GM12878 (cell line): ENCODE measurements at regions of chr2 and their contacts with region 1.

Region 1: DNA sequence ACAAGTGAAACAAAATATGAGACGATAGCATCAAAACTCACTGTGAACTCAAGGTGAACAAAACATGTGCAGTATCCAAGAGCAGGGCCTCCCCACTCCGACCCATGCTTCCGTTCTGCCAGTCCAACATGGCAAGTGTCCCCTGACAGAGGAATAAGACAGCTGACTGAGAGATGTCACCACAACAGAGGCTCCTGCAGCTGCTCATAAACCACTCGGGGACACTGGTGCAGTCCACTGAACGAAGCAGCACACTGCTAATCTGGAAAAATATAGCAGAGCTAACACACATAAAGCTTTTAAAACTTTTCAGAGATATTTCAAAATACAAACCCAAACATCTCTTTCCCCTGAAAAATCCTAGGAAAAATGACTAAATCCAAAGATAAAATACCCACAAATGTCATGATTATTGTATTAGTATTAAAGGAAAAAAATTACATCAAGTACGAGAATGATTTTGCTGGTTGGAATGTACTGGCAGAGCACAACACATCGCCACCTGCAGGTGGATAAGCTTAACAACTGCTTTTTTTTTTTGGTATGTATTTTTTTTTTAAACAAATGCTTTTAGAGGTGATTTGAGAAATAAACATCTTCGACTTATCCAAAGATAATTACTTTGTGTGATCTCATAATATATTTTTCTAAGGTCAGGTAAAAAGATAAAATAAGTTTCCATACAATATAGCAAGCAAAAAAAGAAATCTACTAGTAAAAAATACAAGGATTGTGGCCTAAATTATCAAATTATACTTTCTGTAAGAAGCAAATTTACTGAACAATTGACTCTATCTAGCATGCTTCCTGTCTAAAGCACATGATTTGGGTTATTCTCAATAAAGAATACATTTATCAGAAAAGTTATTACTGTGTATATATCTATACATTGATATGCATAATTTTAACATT is 18.6 kb downstream of the THADA start:
- DNase-seq: no peak
- ATAC-seq: peak; percentile 45; the same call in 1 of the 3 replicates
- H3K4me3 ChIP-seq: no peak overlapping the region
- H3K27ac ChIP-seq: no peak overlapping the region
- H3K4me1 ChIP-seq: no peaks in the 10 kb centered on the region
- H3K27me3 ChIP-seq: no peaks in the 10 kb centered on the region
- CTCF ChIP-seq: peak; percentile 64 to 73 (median 70); a peak in 5 of 6 replicates
- EP300 ChIP-seq: no peak
- POLR2A ChIP-seq: no peak
- RAD21 ChIP-seq: peak; percentile 61

Region 2: GRCh38 chr2:43553341-43553855 is 23.8 kb before region 1 on chr2:
- CTCF ChIA-PET with region 1: interaction called, 19 read pairs
- POLR2A ChIA-PET with region 1: no interaction called
- RAD21 ChIA-PET with region 1: interaction called, 16 read pairs
- SMC1A ChIA-PET with region 1: interaction called, 66 read pairs
- in situ Hi-C with region 1: no loop called
- intact Hi-C with region 1: no loop called
- DNase-seq: no peak
- ATAC-seq: no peak
- H3K4me3 ChIP-seq: no peak overlapping the region
- H3K27ac ChIP-seq: no peak overlapping the region
- H3K4me1 ChIP-seq: no peaks in the 10 kb centered on the region
- H3K27me3 ChIP-seq: no peaks in the 10 kb centered on the region
- CTCF ChIP-seq: no peak
- EP300 ChIP-seq: no peak
- POLR2A ChIP-seq: no peak
- RAD21 ChIP-seq: no peak

Region 3: GRCh38 chr2:43559391-43560230 is 17.6 kb before region 1 on chr2:
- CTCF ChIA-PET with region 1: interaction called, 84 read pairs
- POLR2A ChIA-PET with region 1: interaction called, 3 read pairs
- RAD21 ChIA-PET with region 1: interaction called, 19 read pairs
- SMC1A ChIA-PET with region 1: interaction called, 66 read pairs
- in situ Hi-C with region 1: no loop called
- intact Hi-C with region 1: no loop called
- DNase-seq: peak; percentile 45
- ATAC-seq: peak; percentile 95
- H3K4me3 ChIP-seq: peak overlapping the region; percentile 27; the same call in 1 of the 2 replicates
- H3K27ac ChIP-seq: peak overlapping the region; percentile 50
- H3K4me1 ChIP-seq: peaks cover 19% of the 10 kb centered on the region
- H3K27me3 ChIP-seq: no peaks in the 10 kb centered on the region
- CTCF ChIP-seq: no peak
- EP300 ChIP-seq: peak; percentile 32 to 38; a peak in 2 of 4 replicates
- POLR2A ChIP-seq: no peak
- RAD21 ChIP-seq: no peak

Region 4: GRCh38 chr2:43595603-43596412 is 18.6 kb after region 1 on chr2 and contains the start of gene THADA:
- CTCF ChIA-PET with region 1: interaction called, 66 read pairs
- POLR2A ChIA-PET with region 1: interaction called, 4 read pairs
- RAD21 ChIA-PET with region 1: no interaction called
- SMC1A ChIA-PET with region 1: interaction called, 5 read pairs
- in situ Hi-C with region 1: no loop called
- intact Hi-C with region 1: no loop called
- DNase-seq: peak; percentile 98
- ATAC-seq: peak; percentile 98
- H3K4me3 ChIP-seq: peak within 1 kb of the TSS; percentile 80
- H3K27ac ChIP-seq: peak within 1 kb of the TSS; percentile 94
- H3K4me1 ChIP-seq: peaks cover 3% of the 10 kb centered on the region; the same call in 1 of the 2 replicates
- H3K27me3 ChIP-seq: no peaks in the 10 kb centered on the region
- CTCF ChIP-seq: no peak
- EP300 ChIP-seq: no peak
- POLR2A ChIP-seq: peak; percentile 99
- RAD21 ChIP-seq: no peak
- polyA plus RNA-seq, gene THADA: 17.0 to 17.5 TPM